ENCODE measurements at regions of chr2 and their contacts with region 1.

Region 1: DNA sequence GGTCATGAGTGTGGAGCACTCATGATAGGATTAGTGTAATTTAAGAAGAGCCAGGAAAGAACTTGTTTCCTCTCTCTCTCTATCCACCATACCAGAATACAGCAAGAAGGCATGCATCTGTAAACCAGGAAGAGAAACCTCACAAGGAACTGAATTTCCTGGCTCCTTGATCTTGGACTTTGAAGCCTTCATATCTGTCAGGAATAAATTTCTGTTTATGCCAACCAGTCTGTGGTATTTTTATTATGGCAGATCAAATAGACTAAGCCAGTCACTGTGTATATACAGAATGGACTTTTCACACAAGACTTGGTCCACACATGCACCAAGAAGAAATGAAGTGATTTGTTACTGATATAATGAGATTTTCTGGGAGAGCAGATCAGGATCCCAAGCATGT is 930.1 kb upstream of the TMEFF2 start:
- ATAC-seq: no peak
- H3K4me3 ChIP-seq: no peak overlapping the region
- H3K27ac ChIP-seq: no peak overlapping the region
- H3K4me1 ChIP-seq: no peaks in the 10 kb centered on the region

Region 2: GRCh38 chr2:193024791-193025190 is 100.0 kb before region 1 on chr2:
- in situ Hi-C with region 1: loop called in 1 of 9 experiments (anchors 25 kb)
- ATAC-seq: no peak
- H3K4me3 ChIP-seq: no peak overlapping the region
- H3K27ac ChIP-seq: no peak overlapping the region
- H3K4me1 ChIP-seq: no peaks in the 10 kb centered on the region